PC-3 (cell line): ENCODE measurements at regions of chr12 and their contacts with region 1.

Region 1: GRCh38 chr12:39692258-39692853 is 72.8 kb upstream of the ABCD2 start:
- DNase-seq: peak; percentile 34
- ATAC-seq: no peak
- H3K4me3 ChIP-seq: no peak overlapping the region
- H3K27ac ChIP-seq: no peak overlapping the region
- H3K4me1 ChIP-seq: no peaks in the 10 kb centered on the region; the same call in 1 of the 2 replicates
- H3K27me3 ChIP-seq: peaks cover 4% of the 10 kb centered on the region; the same call in 1 of the 2 replicates
- CTCF ChIP-seq: peak; percentile 62

Region 2: DNA sequence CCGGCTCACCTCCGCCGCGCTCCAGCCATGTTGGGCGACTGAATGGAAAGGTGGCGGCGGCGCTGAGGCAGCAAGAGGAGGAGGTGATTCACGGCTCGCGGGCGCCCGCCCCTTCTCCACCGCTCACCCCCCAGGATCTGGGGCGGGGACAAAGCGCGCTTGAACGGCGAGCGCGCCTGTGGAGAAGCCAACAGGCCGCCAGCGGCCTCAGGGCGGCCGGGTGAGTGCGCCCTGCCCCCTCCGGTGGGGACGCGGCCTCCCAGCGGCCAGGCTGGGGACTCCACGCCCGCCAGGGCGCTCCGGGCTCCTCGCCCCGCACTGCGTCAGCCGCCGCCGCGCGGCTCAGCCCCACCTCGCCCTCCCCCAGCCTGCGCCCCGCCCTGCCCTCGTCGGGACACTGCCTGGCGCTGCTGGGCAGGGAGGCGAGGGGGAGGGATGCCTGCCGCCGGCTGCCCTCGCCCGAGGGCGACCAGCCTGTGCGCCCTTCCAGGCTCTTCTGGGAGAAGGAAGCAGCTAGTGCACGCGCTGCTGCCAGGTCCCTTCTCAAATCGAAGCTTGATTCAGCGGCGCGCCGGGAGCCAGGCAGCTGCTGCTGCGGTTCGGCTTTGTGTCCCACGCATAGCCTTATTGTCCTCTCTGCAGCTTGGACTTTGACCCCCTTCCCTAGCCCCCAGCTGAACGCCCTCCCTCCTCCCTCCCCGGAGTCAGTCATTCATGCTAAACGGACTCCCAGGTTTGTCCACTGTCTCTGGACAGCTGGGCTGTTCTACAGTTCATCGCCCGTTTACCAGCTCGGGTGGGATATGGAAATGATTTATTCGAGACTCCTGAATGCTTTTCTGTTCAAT is 249.1 kb before region 1 on chr12 and contains the start of gene KIF21A:
- CTCF ChIA-PET with region 1: no interaction called
- POLR2A ChIA-PET with region 1: no interaction called
- intact Hi-C with region 1: loop called (anchors 5 kb)
- DNase-seq: peak; percentile 97
- ATAC-seq: peak; percentile 90
- H3K4me3 ChIP-seq: peak within 1 kb of the TSS; percentile 81
- H3K27ac ChIP-seq: peak within 1 kb of the TSS; percentile 61
- H3K4me1 ChIP-seq: peaks cover 22% of the 10 kb centered on the region
- H3K27me3 ChIP-seq: no peaks in the 10 kb centered on the region
- CTCF ChIP-seq: no peak
- total RNA-seq, gene KIF21A: 21.7 and 25.1 TPM in 2 replicates

Region 3: GRCh38 chr12:39538679-39539104 is 153.7 kb before region 1 on chr12:
- CTCF ChIA-PET with region 1: no interaction called
- POLR2A ChIA-PET with region 1: no interaction called
- intact Hi-C with region 1: loop called (anchors 10 kb)
- DNase-seq: no peak
- ATAC-seq: no peak
- H3K4me3 ChIP-seq: no peak overlapping the region
- H3K27ac ChIP-seq: no peak overlapping the region
- H3K4me1 ChIP-seq: 0 out of 2 replicates have a peak, but pooled peaks cover 4% of the 10 kb centered on the region
- H3K27me3 ChIP-seq: no peaks in the 10 kb centered on the region
- CTCF ChIP-seq: no peak

Region 4: GRCh38 chr12:39592295-39592694 is 100.1 kb before region 1 on chr12:
- CTCF ChIA-PET with region 1: no interaction called
- POLR2A ChIA-PET with region 1: no interaction called
- intact Hi-C with region 1: loop called (anchors 5 kb)
- DNase-seq: peak; percentile 60
- ATAC-seq: peak; percentile 73
- H3K4me3 ChIP-seq: no peak overlapping the region
- H3K27ac ChIP-seq: no peak overlapping the region
- H3K4me1 ChIP-seq: peaks cover 12% of the 10 kb centered on the region
- H3K27me3 ChIP-seq: no peaks in the 10 kb centered on the region
- CTCF ChIP-seq: no peak